H1 (cell line): ENCODE measurements at regions of chr1 and their contacts with region 1.

Region 1: GRCh38 chr1:101357444-101357986 is 120.7 kb downstream of the S1PR1 start:
- DNase-seq: peak; percentile 23 to 66
- H3K4me3 ChIP-seq: no peak overlapping the region
- H3K27ac ChIP-seq: no peak overlapping the region
- H3K4me1 ChIP-seq: no peaks in the 10 kb centered on the region
- H3K27me3 ChIP-seq: no peaks in the 10 kb centered on the region
- CTCF ChIP-seq: peak; percentile 3 to 88 (median 67)
- EP300 ChIP-seq: no peak
- POLR2A ChIP-seq: no peak
- RAD21 ChIP-seq: peak; percentile 70 to 73

Region 2: GRCh38 chr1:101309334-101310311 is 47.9 kb before region 1 on chr1:
- CTCF ChIA-PET with region 1: interaction called, 43 read pairs
- POLR2A ChIA-PET with region 1: no interaction called
- DNase-seq: peak in 1 of 2 experiments; percentile 70
- H3K4me3 ChIP-seq: peak overlapping the region; percentile 36 to 60 (median 52); a peak in 7 of 8 replicates
- H3K27ac ChIP-seq: no peak overlapping the region
- H3K4me1 ChIP-seq: peaks cover 0 to 7% (median 3%) of the 10 kb centered on the region in 4 experiments; a peak in 4 of 7 replicates
- H3K27me3 ChIP-seq: no peaks in the 10 kb centered on the region
- CTCF ChIP-seq: peak; percentile 77 to 82 (median 81)
- EP300 ChIP-seq: no peak
- POLR2A ChIP-seq: no peak
- RAD21 ChIP-seq: peak; percentile 81 to 86

Region 3: GRCh38 chr1:101317590-101317989 is 39.9 kb before region 1 on chr1:
- CTCF ChIA-PET with region 1: interaction called, 23 read pairs
- POLR2A ChIA-PET with region 1: no interaction called
- DNase-seq: peak in 1 of 2 experiments; percentile 54
- H3K4me3 ChIP-seq: no peak overlapping the region
- H3K27ac ChIP-seq: no peak overlapping the region
- H3K4me1 ChIP-seq: no peaks in the 10 kb centered on the region
- H3K27me3 ChIP-seq: no peaks in the 10 kb centered on the region; a peak in 1 of 7 replicates
- CTCF ChIP-seq: peak in 2 of 3 experiments; percentile 26 to 40; a peak in 2 of 4 replicates
- EP300 ChIP-seq: no peak
- POLR2A ChIP-seq: no peak
- RAD21 ChIP-seq: peak; percentile 9 to 34; a peak in 3 of 4 replicates

Region 4: DNA sequence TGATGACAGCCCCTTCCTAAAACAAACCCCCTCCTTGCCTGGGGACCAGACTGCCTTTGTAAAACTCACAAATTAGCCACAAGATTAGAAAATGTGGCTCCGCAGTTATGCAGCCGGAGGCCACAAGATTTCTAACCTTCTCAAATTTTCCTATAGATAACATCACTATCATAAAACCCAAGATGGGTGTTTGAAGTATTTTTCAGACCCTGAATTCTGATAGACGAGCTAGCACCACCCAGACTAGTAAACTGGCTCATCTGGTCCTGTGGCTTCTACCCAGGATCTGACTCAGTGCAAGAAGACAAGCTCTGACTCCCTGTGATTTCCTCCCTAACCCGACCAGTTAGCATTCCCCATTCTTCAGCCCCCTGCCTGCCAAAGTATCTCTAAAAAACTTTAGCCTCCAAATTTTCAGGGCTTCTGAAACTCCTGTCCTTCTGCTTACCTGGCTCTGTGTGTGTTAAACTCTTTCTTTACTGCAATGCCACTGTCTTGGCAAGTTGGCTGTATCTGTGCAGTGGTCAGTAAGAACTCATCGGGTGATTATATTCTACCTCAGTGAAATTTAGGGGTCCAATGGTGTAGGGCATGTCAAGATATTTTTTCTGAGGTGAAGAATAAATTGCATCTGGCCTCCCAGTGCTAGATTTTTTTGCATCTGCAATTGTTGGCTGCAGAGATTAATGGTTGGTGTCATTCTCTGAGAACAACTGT is 18.6 kb before region 1 on chr1:
- CTCF ChIA-PET with region 1: interaction called, 23 read pairs
- POLR2A ChIA-PET with region 1: no interaction called
- DNase-seq: no peak
- H3K4me3 ChIP-seq: no peak overlapping the region
- H3K27ac ChIP-seq: no peak overlapping the region
- H3K4me1 ChIP-seq: no peaks in the 10 kb centered on the region
- H3K27me3 ChIP-seq: no peaks in the 10 kb centered on the region
- CTCF ChIP-seq: no peak
- EP300 ChIP-seq: no peak
- POLR2A ChIP-seq: no peak
- RAD21 ChIP-seq: no peak

Region 5: DNA sequence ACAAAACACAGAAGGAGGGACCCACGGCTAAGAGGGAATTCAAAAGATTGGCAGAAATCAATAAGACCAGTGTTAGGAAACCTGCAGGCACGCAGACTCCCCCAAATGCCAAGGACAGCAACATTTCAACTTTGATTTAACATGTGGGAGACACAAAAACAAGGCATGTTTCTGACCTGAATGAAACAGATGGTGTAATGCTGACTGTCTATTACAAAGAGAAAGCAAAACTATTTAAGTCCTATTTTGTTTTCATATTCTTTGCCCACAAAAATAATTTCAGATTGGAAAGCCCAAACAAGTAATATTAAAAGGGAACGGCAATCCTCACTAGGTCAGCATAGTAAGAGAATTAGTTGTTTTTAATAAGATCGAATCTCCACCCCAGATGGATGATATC is 12.8 kb before region 1 on chr1:
- CTCF ChIA-PET with region 1: interaction called, 23 read pairs
- POLR2A ChIA-PET with region 1: no interaction called
- DNase-seq: no peak
- H3K4me3 ChIP-seq: no peak overlapping the region
- H3K27ac ChIP-seq: no peak overlapping the region
- H3K4me1 ChIP-seq: no peaks in the 10 kb centered on the region
- H3K27me3 ChIP-seq: no peaks in the 10 kb centered on the region
- CTCF ChIP-seq: no peak
- EP300 ChIP-seq: no peak
- POLR2A ChIP-seq: no peak
- RAD21 ChIP-seq: no peak

Region 6: GRCh38 chr1:101371259-101371658 is 13.7 kb after region 1 on chr1:
- CTCF ChIA-PET with region 1: interaction called, 30 read pairs
- POLR2A ChIA-PET with region 1: no interaction called
- DNase-seq: no peak
- H3K4me3 ChIP-seq: no peak overlapping the region
- H3K27ac ChIP-seq: no peak overlapping the region
- H3K4me1 ChIP-seq: no peaks in the 10 kb centered on the region
- H3K27me3 ChIP-seq: no peaks in the 10 kb centered on the region
- CTCF ChIP-seq: no peak
- EP300 ChIP-seq: no peak
- POLR2A ChIP-seq: no peak
- RAD21 ChIP-seq: no peak

Region 7: GRCh38 chr1:101438359-101438758 is 80.8 kb after region 1 on chr1:
- CTCF ChIA-PET with region 1: interaction called, 13 read pairs
- POLR2A ChIA-PET with region 1: no interaction called
- DNase-seq: no peak
- H3K4me3 ChIP-seq: no peak overlapping the region
- H3K27ac ChIP-seq: no peak overlapping the region
- H3K4me1 ChIP-seq: no peaks in the 10 kb centered on the region; a peak in 1 of 7 replicates
- H3K27me3 ChIP-seq: no peaks in the 10 kb centered on the region
- CTCF ChIP-seq: peak; percentile 7 to 55 (median 43)
- EP300 ChIP-seq: no peak
- POLR2A ChIP-seq: no peak
- RAD21 ChIP-seq: peak; percentile 71 to 73

Region 8: GRCh38 chr1:101484689-101485338 is 127.3 kb after region 1 on chr1:
- CTCF ChIA-PET with region 1: no interaction called
- POLR2A ChIA-PET with region 1: no interaction called
- DNase-seq: no peak
- H3K4me3 ChIP-seq: no peak overlapping the region
- H3K27ac ChIP-seq: no peak overlapping the region
- H3K4me1 ChIP-seq: peaks cover 0 to 7% (median 0%) of the 10 kb centered on the region in 4 experiments; a peak in 2 of 7 replicates
- H3K27me3 ChIP-seq: no peaks in the 10 kb centered on the region
- CTCF ChIP-seq: no peak
- EP300 ChIP-seq: no peak
- POLR2A ChIP-seq: no peak
- RAD21 ChIP-seq: no peak

Region 9: DNA sequence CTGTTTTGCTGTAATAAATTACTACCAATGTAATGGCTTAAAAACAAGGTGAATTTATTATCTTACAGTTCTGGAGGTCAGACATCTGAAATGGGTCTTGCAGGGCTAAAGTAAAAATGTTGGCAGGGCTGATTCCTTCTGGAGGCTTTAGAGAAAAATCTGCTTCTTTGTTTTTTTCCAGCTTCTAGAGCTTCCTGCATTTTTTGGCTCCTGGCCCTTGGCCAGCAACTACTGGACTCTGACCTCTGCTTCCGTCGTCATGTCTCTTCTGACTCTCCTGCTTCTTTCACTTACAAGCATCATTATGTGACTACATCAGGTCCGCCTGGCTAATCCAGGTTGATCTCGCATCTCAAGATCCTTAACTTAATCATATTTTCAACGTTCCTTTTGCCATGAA is 230.2 kb after region 1 on chr1:
- CTCF ChIA-PET with region 1: no interaction called
- POLR2A ChIA-PET with region 1: no interaction called
- DNase-seq: no peak
- H3K4me3 ChIP-seq: no peak overlapping the region
- H3K27ac ChIP-seq: no peak overlapping the region
- H3K4me1 ChIP-seq: no peaks in the 10 kb centered on the region
- H3K27me3 ChIP-seq: no peaks in the 10 kb centered on the region
- CTCF ChIP-seq: no peak
- EP300 ChIP-seq: no peak
- POLR2A ChIP-seq: no peak
- RAD21 ChIP-seq: no peak

Region 10: GRCh38 chr1:101603726-101604125 is 246.2 kb after region 1 on chr1:
- CTCF ChIA-PET with region 1: no interaction called
- POLR2A ChIA-PET with region 1: no interaction called
- DNase-seq: no peak
- H3K4me3 ChIP-seq: no peak overlapping the region
- H3K27ac ChIP-seq: no peak overlapping the region
- H3K4me1 ChIP-seq: no peaks in the 10 kb centered on the region
- H3K27me3 ChIP-seq: no peaks in the 10 kb centered on the region
- CTCF ChIP-seq: no peak
- EP300 ChIP-seq: no peak
- POLR2A ChIP-seq: no peak
- RAD21 ChIP-seq: no peak

Region 11: DNA sequence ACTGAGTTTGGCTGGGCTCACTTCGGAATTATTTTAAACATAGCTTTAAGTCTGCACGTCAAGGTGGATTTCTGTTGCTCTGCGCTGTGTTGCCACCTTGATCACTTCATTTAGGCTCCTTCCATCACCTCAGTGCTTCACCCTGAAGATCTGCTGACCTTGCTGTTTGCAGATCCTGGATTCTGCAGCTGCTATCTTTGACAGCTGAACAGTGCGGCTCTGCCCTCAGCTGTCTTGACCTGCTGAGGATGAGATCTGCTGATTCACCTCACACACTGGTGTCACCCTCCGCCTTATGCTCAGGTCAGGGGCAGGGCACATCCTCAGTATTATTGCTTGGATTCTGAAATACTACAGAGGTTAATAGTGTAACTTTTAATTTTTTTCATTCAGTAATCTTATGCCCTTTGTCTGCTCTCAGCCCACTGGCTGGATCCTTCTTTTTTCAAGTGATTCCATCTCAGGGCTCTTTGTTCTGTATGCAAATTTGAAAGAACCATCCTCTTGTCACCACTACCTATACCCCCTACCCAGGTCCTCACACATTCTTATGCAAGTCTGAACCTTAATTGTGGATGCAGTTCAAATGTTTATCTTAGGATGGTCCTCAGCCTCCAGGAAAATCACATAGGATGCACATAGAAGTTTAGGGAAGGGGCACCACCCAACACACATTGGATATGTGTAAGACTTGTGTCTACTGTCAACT is 275.2 kb after region 1 on chr1:
- CTCF ChIA-PET with region 1: no interaction called
- POLR2A ChIA-PET with region 1: no interaction called
- DNase-seq: no peak
- H3K4me3 ChIP-seq: no peak overlapping the region
- H3K27ac ChIP-seq: no peak overlapping the region
- H3K4me1 ChIP-seq: peaks cover 0 to 5% (median 4%) of the 10 kb centered on the region in 4 experiments; a peak in 6 of 7 replicates
- H3K27me3 ChIP-seq: no peaks in the 10 kb centered on the region
- CTCF ChIP-seq: no peak
- EP300 ChIP-seq: no peak
- POLR2A ChIP-seq: no peak
- RAD21 ChIP-seq: no peak